Transverse colon (tissue), 4 donors: ENCODE measurements at regions of chr16 and their contacts with region 1.

Region 1: DNA sequence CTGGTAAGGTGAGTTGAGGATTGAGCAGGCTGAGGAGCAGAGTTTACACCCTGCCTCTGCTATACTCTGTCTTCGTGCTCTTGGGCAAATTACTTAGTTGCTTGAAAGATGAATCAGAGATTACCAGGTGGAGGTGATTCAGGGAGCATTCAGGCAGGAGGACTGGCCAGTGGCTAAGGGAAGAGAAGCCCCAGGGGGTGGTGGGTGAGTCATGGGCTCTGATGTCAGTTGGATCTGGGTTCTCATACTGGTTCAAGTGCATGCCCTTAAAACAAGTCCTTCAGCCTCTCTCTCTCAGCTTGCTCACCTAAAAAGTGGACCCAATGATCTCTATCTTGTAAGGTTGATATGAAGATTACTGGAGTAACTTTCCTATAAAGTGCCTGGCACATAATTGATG is 28.4 kb upstream of the BRD7 start:
- DNase-seq: no peak
- H3K4me3 ChIP-seq: no peak overlapping the region
- H3K27ac ChIP-seq: no peak overlapping the region
- H3K4me1 ChIP-seq: no peaks in the 10 kb centered on the region
- H3K27me3 ChIP-seq: no peaks in the 10 kb centered on the region
- CTCF ChIP-seq: no peak
- EP300 ChIP-seq: no peak
- POLR2A ChIP-seq: no peak

Region 2: DNA sequence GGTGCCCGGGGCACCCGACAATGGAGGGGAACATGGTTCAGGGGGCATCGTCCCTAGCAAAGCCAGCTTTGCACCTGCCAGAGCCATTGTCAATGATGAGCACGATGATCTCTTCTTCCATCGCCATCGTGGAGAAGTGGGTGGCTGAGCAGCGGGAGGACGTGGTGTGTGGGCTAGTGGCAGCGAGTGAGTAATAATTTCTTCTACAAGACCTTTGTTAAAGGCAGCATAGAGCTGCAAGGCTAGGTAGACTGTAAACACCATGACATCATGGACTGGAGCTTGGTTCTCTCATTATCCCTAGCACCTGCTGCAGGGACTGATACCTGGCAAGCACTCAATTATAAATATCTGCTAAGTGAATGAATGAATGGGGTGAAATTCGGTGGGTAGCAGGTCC is 338.1 kb before region 1 on chr16:
- in situ Hi-C with region 1: no loop called
- intact Hi-C with region 1: no loop called
- DNase-seq: no peak
- H3K4me3 ChIP-seq: no peak overlapping the region
- H3K27ac ChIP-seq: no peak overlapping the region
- H3K4me1 ChIP-seq: no peaks in the 10 kb centered on the region
- H3K27me3 ChIP-seq: no peaks in the 10 kb centered on the region
- CTCF ChIP-seq: no peak
- EP300 ChIP-seq: no peak
- POLR2A ChIP-seq: no peak

Region 3: GRCh38 chr16:50806099-50807062 is 409.2 kb after region 1 on chr16:
- in situ Hi-C with region 1: loop called in 1 of 4 experiments (anchors 25 kb)
- intact Hi-C with region 1: no loop called
- DNase-seq: peak; percentile 85
- H3K4me3 ChIP-seq: peak overlapping the region in 2 of 4 donors; percentile 11 to 27
- H3K27ac ChIP-seq: peak overlapping the region; percentile 59 to 72 (median 64)
- H3K4me1 ChIP-seq: peaks cover 0 to 7% (median 2%) of the 10 kb centered on the region in 4 donors
- H3K27me3 ChIP-seq: no peaks in the 10 kb centered on the region
- CTCF ChIP-seq: peak; percentile 93 to 95 (median 94)
- EP300 ChIP-seq: no peak
- POLR2A ChIP-seq: no peak